ENCODE measurements at regions of chr7 and their contacts with region 1.

Region 1: GRCh38 chr7:66413379-66414114 is 208.4 kb downstream of the TPST1 start:
- DNase-seq: peak; percentile 33 to 88
- H3K4me3 ChIP-seq: peak overlapping the region; percentile 57 to 72
- H3K27ac ChIP-seq: no peak overlapping the region
- H3K4me1 ChIP-seq: peaks cover 0 to 3% of the 10 kb centered on the region in 2 donors
- H3K27me3 ChIP-seq: no peaks in the 10 kb centered on the region
- CTCF ChIP-seq: peak in 2 of 3 experiments; percentile 24 to 40

Region 2: DNA sequence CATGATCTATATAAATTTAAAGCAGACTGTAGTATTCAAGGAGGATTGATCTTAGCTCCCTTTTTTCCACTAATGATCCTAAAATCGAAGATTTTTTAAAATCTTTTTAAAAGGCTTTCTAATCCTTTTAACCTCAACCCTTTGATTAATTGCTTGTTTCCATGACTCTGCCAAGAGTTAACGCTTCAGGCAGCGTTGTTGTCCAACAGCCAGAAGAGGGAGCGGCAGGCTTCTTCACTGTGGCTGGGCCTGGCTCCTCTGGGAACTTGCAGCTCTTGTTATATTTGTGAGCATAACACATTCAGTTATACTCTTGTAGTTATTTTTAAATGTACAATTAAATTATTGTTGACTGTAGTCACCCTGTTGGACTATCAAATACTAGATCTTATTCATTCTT is 272.6 kb before region 1 on chr7:
- intact Hi-C with region 1: loop called (anchors 10 kb)
- DNase-seq: peak in 1 of 2 donors; percentile 72
- H3K4me3 ChIP-seq: no peak overlapping the region
- H3K27ac ChIP-seq: peak overlapping the region; percentile 1 to 2
- H3K4me1 ChIP-seq: no peaks in the 10 kb centered on the region
- H3K27me3 ChIP-seq: no peaks in the 10 kb centered on the region
- CTCF ChIP-seq: peak; percentile 11 to 63 (median 49)

Region 3: GRCh38 chr7:66204822-66205740 is 208.5 kb before region 1 on chr7 and contains the start of gene TPST1:
- intact Hi-C with region 1: loop called (anchors 10 kb)
- DNase-seq: peak; percentile 37 to 94
- H3K4me3 ChIP-seq: peak within 1 kb of the TSS; percentile 80 to 90
- H3K27ac ChIP-seq: peak within 1 kb of the TSS; percentile 59 to 65
- H3K4me1 ChIP-seq: peaks cover 0 to 3% of the 10 kb centered on the region in 2 donors
- H3K27me3 ChIP-seq: no peaks in the 10 kb centered on the region
- CTCF ChIP-seq: peak; percentile 56 to 73 (median 67)
- total RNA-seq, gene TPST1: 21.9 TPM

Region 4: GRCh38 chr7:66464059-66464458 is 50.5 kb after region 1 on chr7:
- intact Hi-C with region 1: no loop called
- DNase-seq: no peak
- H3K4me3 ChIP-seq: no peak overlapping the region
- H3K27ac ChIP-seq: no peak overlapping the region
- H3K4me1 ChIP-seq: no peaks in the 10 kb centered on the region
- H3K27me3 ChIP-seq: no peaks in the 10 kb centered on the region
- CTCF ChIP-seq: no peak